CD14-positive monocyte (primary cell): ENCODE measurements at regions of chr7 and their contacts with region 1.

Region 1: GRCh38 chr7:150388709-150389531 is 9.8 kb downstream of the ZNF775 start:
- DNase-seq: peak; percentile 66 to 90 (median 78)
- H3K4me3 ChIP-seq: no peak overlapping the region
- H3K4me3 Mint-ChIP-seq: peak overlapping the region in 1 of 2 donors; percentile 4
- H3K27ac ChIP-seq: no peak overlapping the region
- H3K27ac Mint-ChIP-seq: peak overlapping the region in 6 of 7 donors; percentile 29 to 90 (median 53)
- H3K4me1 ChIP-seq: peaks cover 27% of the 10 kb centered on the region in 2 donors
- H3K4me1 Mint-ChIP-seq: peaks cover 25% of the 10 kb centered on the region
- H3K27me3 ChIP-seq: no peaks in the 10 kb centered on the region
- H3K27me3 Mint-ChIP-seq: peaks cover 0 to 4% (median 0%) of the 10 kb centered on the region in 3 donors
- CTCF ChIP-seq: peak; percentile 84

Region 2: DNA sequence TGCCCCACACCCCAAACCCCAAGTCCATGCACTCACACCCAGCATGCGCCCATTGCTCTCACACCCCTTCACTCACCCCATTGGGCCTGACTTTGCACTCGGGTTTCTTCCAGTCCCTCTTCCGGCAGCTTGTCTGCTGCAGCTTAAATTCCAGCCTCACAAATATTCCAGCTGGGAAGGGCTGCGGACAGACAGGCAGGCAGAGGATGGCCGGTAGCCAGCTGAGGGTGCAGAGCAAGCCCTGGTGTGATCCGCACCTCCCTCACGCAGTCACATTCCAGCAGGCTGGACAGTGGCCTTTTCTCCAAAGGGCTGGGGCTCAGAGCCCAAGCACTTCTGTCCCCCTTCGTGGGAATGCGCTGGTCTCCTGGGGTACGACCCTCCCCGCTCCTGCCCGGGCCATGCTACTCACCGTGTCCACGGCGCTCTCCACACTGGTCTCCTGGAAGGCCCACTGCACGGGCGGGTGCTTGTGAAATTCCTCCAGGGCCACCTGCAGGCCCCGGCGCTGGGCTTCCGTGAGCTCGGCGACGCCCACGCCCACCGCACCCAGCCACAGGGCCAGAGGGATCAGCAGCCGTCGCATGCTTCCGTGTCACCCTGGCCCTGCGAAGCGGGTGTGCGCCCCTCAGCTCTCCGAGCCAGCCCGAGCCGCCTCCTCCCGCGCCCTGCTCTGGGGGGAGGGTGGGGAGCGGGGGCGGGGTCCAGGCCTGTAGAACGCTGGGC is 48.7 kb before region 1 on chr7:
- intact Hi-C with region 1: loop called in 1 of 2 experiments (anchors 10 kb)
- DNase-seq: no peak
- H3K4me3 ChIP-seq: no peak overlapping the region
- H3K4me3 Mint-ChIP-seq: peak overlapping the region in 1 of 2 donors; percentile 50
- H3K27ac ChIP-seq: no peak overlapping the region
- H3K27ac Mint-ChIP-seq: no peak overlapping the region
- H3K4me1 ChIP-seq: peaks cover 6 to 12% of the 10 kb centered on the region in 2 donors
- H3K4me1 Mint-ChIP-seq: peaks cover 12% of the 10 kb centered on the region
- H3K27me3 ChIP-seq: peaks cover 27 to 42% of the 10 kb centered on the region in 2 donors
- H3K27me3 Mint-ChIP-seq: peaks cover 40 to 49% (median 43%) of the 10 kb centered on the region in 3 donors
- CTCF ChIP-seq: no peak

Region 3: DNA sequence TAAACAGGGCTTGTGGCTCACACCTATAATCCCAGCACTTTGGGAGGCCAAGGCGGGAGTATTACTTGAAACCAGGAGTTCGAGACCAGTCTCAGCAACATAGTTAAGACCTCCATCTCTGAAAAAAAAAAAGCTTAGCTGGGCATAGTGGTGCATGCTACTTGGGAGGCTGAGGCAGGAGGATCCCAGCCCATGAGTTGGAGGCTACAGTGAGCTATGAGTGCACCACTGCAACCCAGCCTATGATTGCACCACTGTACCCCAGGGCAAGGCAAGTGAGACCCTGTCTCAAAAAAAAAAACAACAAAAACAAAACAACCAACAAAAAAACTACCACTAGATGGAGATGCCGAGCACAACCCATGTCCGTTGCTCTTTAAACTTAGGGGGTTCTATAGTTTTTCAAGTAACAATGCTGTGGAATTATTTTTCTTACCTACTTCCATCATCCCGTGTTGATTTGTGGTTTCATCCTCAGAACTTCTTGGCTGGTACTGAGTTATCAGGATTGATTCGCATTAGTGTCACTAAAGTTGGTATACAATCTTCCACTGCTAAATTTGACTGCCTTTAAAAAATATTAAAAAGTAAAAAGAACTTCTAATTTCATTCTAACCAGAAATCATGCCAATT is 32.5 kb before region 1 on chr7:
- intact Hi-C with region 1: loop called in 1 of 2 experiments (anchors 5 kb)
- DNase-seq: peak in 2 of 3 donors; percentile 52 to 55
- H3K4me3 ChIP-seq: no peak overlapping the region
- H3K4me3 Mint-ChIP-seq: peak overlapping the region in 1 of 2 donors; percentile 21
- H3K27ac ChIP-seq: no peak overlapping the region
- H3K27ac Mint-ChIP-seq: peak overlapping the region in 1 of 7 donors; percentile 84
- H3K4me1 ChIP-seq: peaks cover 5 to 10% of the 10 kb centered on the region in 2 donors
- H3K4me1 Mint-ChIP-seq: peaks cover 19% of the 10 kb centered on the region
- H3K27me3 ChIP-seq: no peaks in the 10 kb centered on the region
- H3K27me3 Mint-ChIP-seq: peaks cover 0 to 3% (median 2%) of the 10 kb centered on the region in 3 donors
- CTCF ChIP-seq: peak; percentile 86